Activated T-helper 2 cell treated with anti-CD3 and anti-CD28 coated beads, Interferon-gamma antibody, Interleukin-2, Interleukin-4, amounts not matched to agents 10 μg/mL and 5 μg/mL and 100 μg/mL, durations not matched to agents 14 hours and 24 hours and 36 hours (primary cell): ENCODE measurements at regions of chr20 and their contacts with region 1.

Region 1: DNA sequence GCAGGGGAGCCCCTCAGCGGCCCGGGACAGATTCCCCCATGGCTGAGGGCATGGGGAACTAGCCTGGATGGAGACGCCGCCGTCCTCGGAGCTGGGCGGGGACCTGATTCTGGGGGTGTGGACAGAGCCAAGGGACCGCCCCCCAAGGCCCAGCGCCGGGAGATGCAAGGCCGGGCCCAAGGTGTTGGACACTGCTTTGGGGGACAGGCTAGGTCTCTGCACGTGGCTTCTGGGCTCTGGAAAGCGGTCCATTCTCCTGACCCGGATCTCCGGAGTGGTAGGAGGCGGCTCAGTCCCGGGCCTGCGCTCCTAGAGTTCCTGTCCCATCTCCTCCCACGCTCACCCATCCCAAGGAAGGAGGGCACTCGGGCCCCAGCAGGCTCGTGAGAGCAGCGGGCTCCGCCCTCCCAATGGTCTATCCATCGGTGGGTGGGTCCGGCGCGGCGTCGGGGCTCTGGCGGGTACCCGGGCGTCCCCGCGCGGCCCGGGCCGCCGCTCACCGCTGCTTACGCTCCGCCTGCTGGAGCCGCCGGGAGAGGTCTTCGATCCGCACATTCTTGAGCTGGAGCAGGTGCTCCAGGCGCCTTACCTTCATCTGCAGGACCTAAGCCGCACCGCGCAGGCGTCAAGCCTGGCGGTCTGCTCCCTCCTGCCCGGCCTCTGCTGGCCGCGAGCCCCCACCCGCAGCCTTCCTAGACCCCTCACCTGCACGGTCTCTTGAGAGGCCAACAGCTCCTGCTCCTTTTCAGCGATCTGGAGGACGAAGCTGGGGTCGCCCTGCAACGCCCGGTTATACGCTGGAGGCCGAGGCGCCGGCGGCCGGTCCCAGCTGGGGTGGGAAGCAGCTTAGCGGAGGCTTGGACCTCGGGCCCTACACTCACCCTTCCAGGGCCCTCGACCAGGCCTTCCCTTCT is 3.3 kb downstream of the SPEF1 start:
- DNase-seq: no peak
- H3K4me3 Mint-ChIP-seq: peak overlapping the region; percentile 72
- H3K27ac Mint-ChIP-seq: no peak overlapping the region
- H3K4me1 Mint-ChIP-seq: peaks cover 22% of the 10 kb centered on the region
- H3K27me3 Mint-ChIP-seq: peaks cover 24% of the 10 kb centered on the region

Region 2: DNA sequence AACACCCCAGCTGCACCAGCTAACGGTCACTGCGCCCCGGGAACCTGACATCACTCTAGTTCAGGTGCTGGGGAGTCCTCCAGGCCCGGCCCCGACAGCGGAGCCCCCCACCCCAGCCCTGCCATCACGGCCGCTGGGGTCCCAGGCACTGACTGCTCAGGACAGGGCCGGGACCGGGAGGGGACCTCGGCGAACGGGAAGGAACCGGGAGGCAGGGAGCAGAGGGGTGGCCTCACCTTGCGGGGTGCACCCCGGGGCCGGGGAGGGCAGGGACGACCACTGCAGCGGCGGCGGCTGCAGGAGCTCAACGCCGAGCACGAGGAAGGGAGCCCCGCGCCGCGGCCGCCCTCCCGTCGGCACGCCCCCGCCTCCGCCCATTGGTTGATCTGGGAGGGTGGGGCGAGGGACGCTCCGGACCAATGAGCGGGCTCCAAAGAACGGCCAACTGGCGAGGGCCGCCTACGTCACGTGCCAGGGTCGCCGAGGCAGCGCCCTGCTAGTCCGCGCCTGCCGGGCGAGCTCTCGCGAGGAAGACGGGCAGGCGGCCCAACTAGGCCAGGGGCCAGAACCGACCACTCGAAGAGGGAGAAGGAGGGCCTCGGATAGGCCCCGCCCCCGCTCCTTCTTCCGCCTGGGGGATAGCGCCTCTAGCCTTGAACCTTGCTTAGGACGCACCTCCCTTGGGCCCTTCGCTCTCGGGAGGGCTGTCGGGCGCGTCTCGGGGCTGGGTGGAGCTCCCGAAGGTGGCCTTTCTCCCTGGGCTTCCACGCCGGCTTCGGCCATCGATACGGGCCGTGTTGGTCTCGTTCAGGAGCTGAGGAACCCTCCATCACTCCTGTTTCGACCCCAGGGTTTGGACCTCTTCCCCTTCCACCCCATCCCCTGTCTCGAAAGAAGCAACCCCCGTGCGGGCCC is 10.3 kb before region 1 on chr20 and contains the start of gene ADISSP:
- intact Hi-C with region 1: loop called (anchors 1 kb)
- DNase-seq: peak; percentile 97
- H3K4me3 Mint-ChIP-seq: peak within 1 kb of the TSS; percentile 86
- H3K27ac Mint-ChIP-seq: peak within 1 kb of the TSS; percentile 94
- H3K4me1 Mint-ChIP-seq: peaks cover 21% of the 10 kb centered on the region
- H3K27me3 Mint-ChIP-seq: peaks cover 3% of the 10 kb centered on the region
- total RNA-seq, gene ADISSP: 55.8 and 56.3 TPM in 2 replicates